MCF 10A (cell line): ENCODE measurements at regions of chr5 and their contacts with region 1.

Region 1: DNA sequence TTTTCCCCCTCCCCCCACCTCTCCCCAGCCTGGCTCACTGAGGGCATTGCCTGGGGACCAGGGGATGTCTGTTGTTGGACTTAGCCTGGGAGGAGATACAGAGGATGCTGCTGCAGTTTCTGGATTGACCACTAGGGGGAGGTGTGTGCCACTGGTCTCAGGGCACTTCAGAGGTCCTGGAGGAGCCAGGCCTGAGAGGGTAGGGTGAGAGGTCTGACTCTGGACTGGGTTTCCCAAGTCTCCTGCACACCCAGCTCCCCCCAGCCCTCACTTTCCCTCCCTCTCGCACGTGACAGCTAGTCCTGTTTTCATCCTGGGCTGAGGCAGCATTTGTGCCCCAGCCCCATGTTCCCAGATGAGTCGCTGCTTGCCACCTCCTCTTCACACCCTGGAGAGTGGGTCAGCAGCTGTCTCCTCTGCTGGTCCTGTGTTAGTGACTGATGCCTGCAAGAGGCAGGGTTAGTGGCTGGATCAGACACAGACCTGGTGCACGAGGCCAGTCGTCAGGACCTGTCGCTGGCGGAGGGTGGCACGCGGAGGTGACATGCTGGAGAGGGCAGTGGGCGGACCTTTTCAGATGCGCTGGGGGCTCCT is 4.4 kb downstream of the IL3 start:
- DNase-seq: peak; percentile 88
- H3K4me3 Mint-ChIP-seq: no peak overlapping the region
- H3K27ac Mint-ChIP-seq: no peak overlapping the region
- H3K4me1 Mint-ChIP-seq: peaks cover 5% of the 10 kb centered on the region
- H3K27me3 Mint-ChIP-seq: no peaks in the 10 kb centered on the region
- CTCF ChIP-seq: peak; percentile 97

Region 2: DNA sequence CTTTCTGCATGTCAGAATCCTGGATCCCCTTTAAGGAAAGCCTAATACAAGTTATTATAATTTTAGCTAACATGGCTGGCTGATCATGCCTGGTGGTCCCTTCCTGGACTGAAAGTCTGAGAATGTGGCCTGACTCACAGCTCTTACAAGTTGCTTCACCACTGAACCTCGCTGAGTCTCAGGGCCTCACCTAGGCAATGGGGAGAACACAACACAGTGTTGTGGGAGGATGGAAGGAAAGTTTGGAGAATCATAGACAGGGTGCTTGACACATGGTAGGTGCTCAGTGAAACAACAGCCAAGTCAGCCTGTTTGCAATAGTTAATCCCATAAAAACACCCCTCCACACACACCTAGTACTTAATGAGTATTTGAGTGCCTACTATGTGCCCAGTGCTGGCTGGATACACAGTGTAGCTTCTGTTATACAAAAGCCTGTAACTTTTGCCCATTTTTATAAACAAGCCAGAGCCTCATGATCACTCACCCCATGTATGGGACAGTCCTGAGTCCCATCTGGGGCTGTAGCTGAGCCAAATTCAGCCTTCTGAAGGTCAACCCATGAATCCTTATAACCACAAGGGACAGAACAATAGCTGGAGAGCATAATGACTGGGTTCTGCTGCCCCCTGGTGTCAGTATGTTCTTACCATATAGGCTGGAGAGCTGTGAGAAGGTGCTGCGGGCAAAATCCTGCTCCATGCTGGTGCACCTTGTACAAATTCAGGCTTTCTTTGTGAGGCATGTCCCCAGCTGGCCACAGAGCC is 57.3 kb before region 1 on chr5:
- CTCF ChIA-PET with region 1: interaction called, 41 read pairs
- POLR2A ChIA-PET with region 1: no interaction called
- intact Hi-C with region 1: no loop called
- DNase-seq: peak; percentile 90
- H3K4me3 Mint-ChIP-seq: no peak overlapping the region
- H3K27ac Mint-ChIP-seq: no peak overlapping the region
- H3K4me1 Mint-ChIP-seq: peaks cover 19% of the 10 kb centered on the region
- H3K27me3 Mint-ChIP-seq: no peaks in the 10 kb centered on the region
- CTCF ChIP-seq: peak; percentile 95

Region 3: GRCh38 chr5:132103332-132103951 is 38.6 kb after region 1 on chr5:
- CTCF ChIA-PET with region 1: interaction called, 7 read pairs
- POLR2A ChIA-PET with region 1: no interaction called
- intact Hi-C with region 1: loop called (anchors 2 kb)
- DNase-seq: peak; percentile 96
- H3K4me3 Mint-ChIP-seq: no peak overlapping the region
- H3K27ac Mint-ChIP-seq: peak overlapping the region; percentile 90
- H3K4me1 Mint-ChIP-seq: peaks cover 28% of the 10 kb centered on the region
- H3K27me3 Mint-ChIP-seq: no peaks in the 10 kb centered on the region
- CTCF ChIP-seq: no peak

Region 4: GRCh38 chr5:132220491-132220890 is 155.7 kb after region 1 on chr5:
- CTCF ChIA-PET with region 1: interaction called, 11 read pairs
- POLR2A ChIA-PET with region 1: no interaction called
- intact Hi-C with region 1: loop called (anchors 1 kb)
- DNase-seq: no peak
- H3K4me3 Mint-ChIP-seq: no peak overlapping the region
- H3K27ac Mint-ChIP-seq: no peak overlapping the region
- H3K4me1 Mint-ChIP-seq: peaks cover 38% of the 10 kb centered on the region
- H3K27me3 Mint-ChIP-seq: no peaks in the 10 kb centered on the region
- CTCF ChIP-seq: no peak

Region 5: GRCh38 chr5:132293066-132293991 is 228.5 kb after region 1 on chr5:
- CTCF ChIA-PET with region 1: interaction called, 3 read pairs
- POLR2A ChIA-PET with region 1: interaction called, 3 read pairs
- intact Hi-C with region 1: loop called (anchors 1 kb)
- DNase-seq: peak; percentile 91
- H3K4me3 Mint-ChIP-seq: peak overlapping the region; percentile 98
- H3K27ac Mint-ChIP-seq: peak overlapping the region; percentile 89
- H3K4me1 Mint-ChIP-seq: peaks cover 40% of the 10 kb centered on the region
- H3K27me3 Mint-ChIP-seq: no peaks in the 10 kb centered on the region
- CTCF ChIP-seq: peak; percentile 19

Region 6: DNA sequence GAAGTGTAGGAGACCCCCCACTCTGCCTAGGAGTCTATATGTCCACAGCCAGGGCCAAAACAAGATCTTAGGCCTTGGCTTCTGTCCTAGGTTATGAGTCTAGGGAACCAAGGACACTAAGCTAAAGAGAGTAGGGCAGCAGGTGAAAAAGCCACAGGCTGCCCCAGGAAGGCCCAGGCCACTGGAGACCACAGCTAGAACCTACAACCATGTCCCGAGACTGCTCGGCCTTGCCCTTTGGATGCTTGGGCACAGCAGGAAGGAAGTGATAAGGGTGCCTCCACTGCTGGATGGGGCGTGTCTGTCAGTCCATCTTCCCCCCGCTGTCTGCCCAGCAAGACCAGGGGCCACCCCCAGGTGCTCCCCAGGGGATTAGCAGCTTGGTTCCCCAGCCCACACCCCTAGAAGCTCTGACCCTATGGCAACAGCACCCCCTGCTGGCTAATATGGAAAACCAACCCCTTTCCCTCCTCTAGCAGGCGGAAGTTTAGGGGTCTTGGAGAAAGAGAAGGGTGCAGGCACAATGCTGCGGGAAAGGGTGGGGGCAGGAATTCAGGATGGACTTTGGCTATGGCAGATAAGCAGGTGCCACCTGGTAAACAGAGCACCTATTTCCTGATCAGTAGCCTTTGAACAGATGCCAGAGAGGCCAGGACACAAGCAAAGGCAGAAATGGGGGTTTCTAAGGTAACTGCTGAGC is 436.2 kb after region 1 on chr5:
- CTCF ChIA-PET with region 1: interaction called, 15 read pairs
- POLR2A ChIA-PET with region 1: no interaction called
- intact Hi-C with region 1: loop called (anchors 1 kb)
- DNase-seq: peak; percentile 91
- H3K4me3 Mint-ChIP-seq: no peak overlapping the region
- H3K27ac Mint-ChIP-seq: peak overlapping the region; percentile 83
- H3K4me1 Mint-ChIP-seq: peaks cover 35% of the 10 kb centered on the region
- H3K27me3 Mint-ChIP-seq: no peaks in the 10 kb centered on the region
- CTCF ChIP-seq: peak; percentile 99